PC-3 (cell line): ENCODE measurements at regions of chr1 and their contacts with region 1.

Region 1: GRCh38 chr1:65148548-65149350 is 746 bp downstream of the AK4 start:
- DNase-seq: peak; percentile 61
- ATAC-seq: peak; percentile 58
- H3K4me3 ChIP-seq: peak overlapping the region; percentile 72
- H3K27ac ChIP-seq: no peak overlapping the region
- H3K4me1 ChIP-seq: peaks cover 15% of the 10 kb centered on the region; the same call in 1 of the 2 replicates
- H3K27me3 ChIP-seq: no peaks in the 10 kb centered on the region
- CTCF ChIP-seq: no peak

Region 2: GRCh38 chr1:64459743-64460142 is 689.0 kb before region 1 on chr1:
- CTCF ChIA-PET with region 1: no interaction called
- POLR2A ChIA-PET with region 1: no interaction called
- intact Hi-C with region 1: no loop called
- DNase-seq: no peak
- ATAC-seq: no peak
- H3K4me3 ChIP-seq: no peak overlapping the region
- H3K27ac ChIP-seq: no peak overlapping the region
- H3K4me1 ChIP-seq: no peaks in the 10 kb centered on the region
- H3K27me3 ChIP-seq: no peaks in the 10 kb centered on the region
- CTCF ChIP-seq: no peak

Region 3: DNA sequence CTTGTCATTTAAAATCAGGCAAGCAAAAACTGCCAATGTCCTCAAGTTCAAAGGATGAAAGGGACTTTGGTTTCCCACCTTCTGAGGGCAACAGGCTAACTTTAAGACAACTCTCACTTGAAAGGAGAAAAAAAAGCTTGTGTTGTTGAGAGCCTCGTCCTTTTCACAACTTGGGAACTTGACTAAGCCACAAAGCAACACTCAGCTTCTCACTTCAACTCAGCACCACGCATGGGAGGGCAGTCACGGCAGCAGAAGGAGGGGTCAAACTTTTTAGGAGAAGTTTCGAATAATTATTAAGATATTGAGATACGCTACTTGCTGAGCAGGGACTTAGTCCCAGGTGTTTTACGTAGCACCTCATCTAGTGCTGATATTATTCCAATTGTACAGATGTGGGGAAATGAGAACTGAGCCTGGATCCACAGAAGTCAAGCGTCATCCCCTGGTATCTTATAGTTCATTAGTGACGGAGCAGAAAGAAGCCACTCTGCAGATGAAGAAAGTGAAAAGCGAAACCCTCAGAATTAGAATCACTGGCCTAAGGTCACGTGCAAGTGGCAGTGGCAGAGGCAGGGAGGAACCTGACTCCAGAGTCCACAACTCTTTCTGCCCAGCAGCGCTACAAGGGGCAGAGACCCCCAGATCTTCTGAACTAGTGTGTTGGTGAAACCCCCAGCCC is 266.0 kb before region 1 on chr1:
- CTCF ChIA-PET with region 1: no interaction called
- POLR2A ChIA-PET with region 1: no interaction called
- intact Hi-C with region 1: loop called (anchors 10 kb)
- DNase-seq: no peak
- ATAC-seq: no peak
- H3K4me3 ChIP-seq: no peak overlapping the region
- H3K27ac ChIP-seq: no peak overlapping the region
- H3K4me1 ChIP-seq: peaks cover 16% of the 10 kb centered on the region
- H3K27me3 ChIP-seq: no peaks in the 10 kb centered on the region
- CTCF ChIP-seq: no peak

Region 4: DNA sequence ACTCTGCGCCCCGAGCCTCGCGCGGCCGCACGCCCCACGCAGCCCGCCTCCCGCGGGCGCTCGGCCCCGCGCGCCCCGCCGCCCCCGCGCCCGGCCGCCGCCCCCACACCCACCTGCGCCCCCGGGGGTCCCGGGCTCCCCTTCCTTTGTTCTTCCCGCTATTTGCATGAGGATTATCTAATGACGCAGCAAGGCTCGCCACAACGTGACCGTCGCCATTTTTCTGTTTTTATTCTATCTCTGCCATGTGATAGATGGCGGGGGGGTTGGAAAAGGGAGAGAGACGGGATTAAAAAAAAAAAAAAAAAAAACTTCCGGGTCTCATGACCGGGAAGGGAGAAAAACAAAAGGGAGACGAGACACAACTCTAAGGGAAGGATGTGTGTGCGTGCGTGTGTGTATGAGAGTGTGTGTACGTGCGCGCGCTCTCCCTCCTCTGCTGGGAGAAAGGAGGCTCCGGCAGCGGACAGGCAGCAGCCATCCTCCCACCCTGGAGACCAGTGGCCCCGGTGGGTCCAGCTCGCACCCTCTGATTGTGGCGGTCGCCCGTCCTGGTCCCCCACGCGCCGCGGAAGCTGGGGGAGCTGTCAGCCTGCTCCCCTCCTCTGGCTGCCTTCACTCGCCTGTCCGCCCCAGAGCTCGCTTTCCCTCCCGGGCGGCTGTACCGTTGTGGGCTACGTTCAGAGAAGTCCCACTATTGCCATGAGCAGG is 81.1 kb before region 1 on chr1:
- CTCF ChIA-PET with region 1: no interaction called
- POLR2A ChIA-PET with region 1: no interaction called
- intact Hi-C with region 1: loop called (anchors 2 kb)
- DNase-seq: peak; percentile 50
- ATAC-seq: peak; percentile 34
- H3K4me3 ChIP-seq: peak overlapping the region; percentile 79
- H3K27ac ChIP-seq: no peak overlapping the region
- H3K4me1 ChIP-seq: peaks cover 8% of the 10 kb centered on the region; the same call in 1 of the 2 replicates
- H3K27me3 ChIP-seq: no peaks in the 10 kb centered on the region
- CTCF ChIP-seq: no peak

Region 5: GRCh38 chr1:65175171-65176055 is 26.7 kb after region 1 on chr1:
- CTCF ChIA-PET with region 1: no interaction called
- POLR2A ChIA-PET with region 1: no interaction called
- intact Hi-C with region 1: loop called (anchors 2 kb)
- DNase-seq: no peak
- ATAC-seq: no peak
- H3K4me3 ChIP-seq: no peak overlapping the region
- H3K27ac ChIP-seq: no peak overlapping the region
- H3K4me1 ChIP-seq: peaks cover 67% of the 10 kb centered on the region
- H3K27me3 ChIP-seq: no peaks in the 10 kb centered on the region
- CTCF ChIP-seq: no peak

Region 6: GRCh38 chr1:65209005-65209885 is 60.5 kb after region 1 on chr1:
- CTCF ChIA-PET with region 1: interaction called, 3 read pairs
- POLR2A ChIA-PET with region 1: no interaction called
- intact Hi-C with region 1: loop called (anchors 2 kb)
- DNase-seq: peak; percentile 70
- ATAC-seq: peak; percentile 77
- H3K4me3 ChIP-seq: no peak overlapping the region
- H3K27ac ChIP-seq: no peak overlapping the region
- H3K4me1 ChIP-seq: no peaks in the 10 kb centered on the region
- H3K27me3 ChIP-seq: no peaks in the 10 kb centered on the region
- CTCF ChIP-seq: peak; percentile 77

Region 7: DNA sequence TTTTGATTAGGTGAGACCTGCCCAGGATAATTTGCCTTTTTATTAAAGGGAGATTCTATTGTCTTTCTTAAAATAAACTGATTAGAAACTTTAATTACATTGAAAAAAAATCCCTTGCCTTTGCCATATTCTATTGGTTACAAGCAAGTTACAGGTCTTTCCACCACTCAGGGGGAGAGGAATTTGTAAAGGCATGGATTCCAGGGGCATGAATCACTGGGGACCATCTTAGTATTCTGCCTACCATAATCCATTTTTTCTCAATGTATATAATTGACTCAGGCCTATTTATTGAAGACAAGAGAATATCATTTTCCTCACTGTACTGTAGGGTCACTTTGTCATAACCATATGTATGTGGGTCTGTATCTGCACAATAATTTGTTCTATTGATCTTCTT is 519.6 kb after region 1 on chr1:
- CTCF ChIA-PET with region 1: no interaction called
- POLR2A ChIA-PET with region 1: no interaction called
- intact Hi-C with region 1: no loop called
- DNase-seq: no peak
- ATAC-seq: no peak
- H3K4me3 ChIP-seq: no peak overlapping the region
- H3K27ac ChIP-seq: no peak overlapping the region
- H3K4me1 ChIP-seq: no peaks in the 10 kb centered on the region
- H3K27me3 ChIP-seq: peaks cover 40% of the 10 kb centered on the region
- CTCF ChIP-seq: no peak